HAP-1 (cell line): ENCODE measurements at regions of chr7 and their contacts with region 1.

Region 1: DNA sequence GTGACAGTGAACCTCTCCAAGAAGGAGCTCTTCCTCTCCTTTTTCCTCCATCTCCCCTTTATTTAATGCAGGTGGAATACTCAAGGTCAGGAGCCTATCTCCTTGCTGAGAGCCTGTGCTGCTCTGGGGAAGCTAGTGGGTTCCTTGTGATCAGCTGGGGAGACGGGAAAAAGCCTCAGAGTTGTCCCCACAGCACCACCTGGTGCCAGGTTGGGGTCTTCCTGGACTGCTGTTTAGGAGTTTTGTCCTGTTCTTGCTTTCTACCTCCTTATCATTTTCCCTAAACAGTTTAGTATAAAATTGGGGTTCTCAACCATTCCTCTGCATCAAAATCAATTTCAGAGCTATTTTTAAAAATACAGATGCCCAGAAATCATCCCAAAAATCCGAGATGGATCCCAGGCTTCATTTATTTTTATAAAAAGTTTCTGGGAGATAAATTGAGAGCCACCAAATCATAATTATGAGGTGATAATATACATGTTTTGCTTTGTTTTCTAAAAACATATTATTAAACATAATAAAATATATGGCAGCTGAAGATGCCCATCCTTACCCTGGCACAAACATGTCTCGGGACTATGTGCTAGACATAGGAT is 44.3 kb downstream of the MACC1 start:
- DNase-seq: peak; percentile 69 to 76
- H3K4me3 ChIP-seq: no peak overlapping the region
- H3K4me1 ChIP-seq: no peaks in the 10 kb centered on the region
- H3K27me3 ChIP-seq: no peaks in the 10 kb centered on the region

Region 2: DNA sequence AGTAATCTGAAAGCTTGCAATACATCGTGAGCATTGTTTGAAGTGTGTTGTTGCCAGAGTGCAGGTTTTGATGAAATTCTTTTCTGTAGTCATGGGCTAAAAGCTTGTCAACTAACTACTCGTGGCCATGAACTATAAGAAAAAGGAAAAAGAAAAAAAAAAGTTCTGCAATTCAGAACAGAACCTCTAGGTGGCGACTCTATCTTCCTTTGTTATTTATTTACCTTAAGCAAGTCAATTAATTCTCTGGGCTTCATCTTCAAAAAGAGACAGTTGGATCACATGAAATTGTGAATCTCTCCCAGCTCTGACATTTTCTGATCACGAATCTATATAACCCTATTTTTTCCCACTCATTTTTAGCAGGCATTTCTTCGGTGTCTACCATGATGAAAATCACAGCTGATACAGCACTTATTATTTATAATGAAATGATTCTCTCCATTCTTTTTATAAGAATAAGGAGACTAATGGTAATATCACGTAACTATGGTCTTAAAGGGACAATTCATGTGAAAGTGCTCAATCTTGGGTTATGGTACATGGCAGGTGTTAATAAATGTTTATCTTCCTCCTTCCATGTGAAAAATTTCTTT is 418.2 kb before region 1 on chr7:
- in situ Hi-C with region 1: loop called (anchors 25 kb)
- DNase-seq: peak in 1 of 2 experiments; percentile 12
- H3K4me3 ChIP-seq: no peak overlapping the region
- H3K4me1 ChIP-seq: no peaks in the 10 kb centered on the region
- H3K27me3 ChIP-seq: no peaks in the 10 kb centered on the region

Region 3: DNA sequence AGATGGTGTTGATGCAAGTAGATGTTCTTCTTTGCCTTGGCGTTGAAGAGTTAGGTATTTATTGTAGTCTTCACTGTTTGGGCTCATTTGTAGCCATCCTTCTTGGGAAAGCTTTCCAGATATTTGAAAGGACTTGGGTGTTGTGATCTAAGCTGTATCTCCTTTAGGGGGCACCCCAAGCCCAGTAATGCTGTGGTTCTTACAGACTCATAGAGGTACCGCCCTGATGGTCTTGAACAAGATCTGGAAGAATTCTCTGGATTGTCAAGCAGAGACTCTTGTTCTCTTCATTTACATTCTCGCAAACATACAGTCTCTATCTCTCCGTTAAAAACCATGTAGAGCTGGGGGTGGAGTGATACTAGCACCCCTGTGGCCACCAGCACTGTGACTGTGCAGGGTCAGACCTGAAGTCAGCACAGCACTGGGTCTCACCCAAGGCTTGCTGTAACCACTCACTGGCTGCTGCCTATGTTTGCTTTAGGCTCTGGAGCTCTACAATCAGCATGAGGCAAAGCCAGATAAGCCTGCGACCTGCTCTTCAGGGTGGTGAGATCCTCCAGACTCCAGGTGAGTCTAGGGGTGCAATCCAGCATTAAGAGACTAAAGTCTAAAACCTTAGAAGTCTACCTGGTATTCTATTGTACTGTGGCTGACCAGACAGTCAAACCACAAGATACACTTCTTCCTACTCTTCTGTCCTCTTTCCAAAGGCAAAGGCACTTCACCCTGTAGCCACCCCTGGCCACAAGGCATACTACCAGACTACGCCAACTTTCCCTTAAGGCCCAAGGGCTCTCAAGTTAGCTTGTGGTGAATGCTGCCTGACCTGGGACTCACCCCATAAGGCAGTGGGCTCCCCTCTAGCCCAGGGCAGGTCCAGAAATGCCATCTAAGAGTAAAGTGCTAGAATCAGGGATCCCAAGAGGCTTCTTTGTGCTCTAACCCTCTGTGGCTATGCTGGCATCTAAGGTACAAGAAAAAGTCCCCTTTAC is 189.7 kb before region 1 on chr7:
- in situ Hi-C with region 1: loop called (anchors 25 kb)
- DNase-seq: peak; percentile 27 to 70
- H3K4me3 ChIP-seq: no peak overlapping the region
- H3K4me1 ChIP-seq: no peaks in the 10 kb centered on the region
- H3K27me3 ChIP-seq: no peaks in the 10 kb centered on the region